Endothelial cell of umbilical vein (primary cell): ENCODE measurements at regions of chr5 and their contacts with region 1.

Region 1: DNA sequence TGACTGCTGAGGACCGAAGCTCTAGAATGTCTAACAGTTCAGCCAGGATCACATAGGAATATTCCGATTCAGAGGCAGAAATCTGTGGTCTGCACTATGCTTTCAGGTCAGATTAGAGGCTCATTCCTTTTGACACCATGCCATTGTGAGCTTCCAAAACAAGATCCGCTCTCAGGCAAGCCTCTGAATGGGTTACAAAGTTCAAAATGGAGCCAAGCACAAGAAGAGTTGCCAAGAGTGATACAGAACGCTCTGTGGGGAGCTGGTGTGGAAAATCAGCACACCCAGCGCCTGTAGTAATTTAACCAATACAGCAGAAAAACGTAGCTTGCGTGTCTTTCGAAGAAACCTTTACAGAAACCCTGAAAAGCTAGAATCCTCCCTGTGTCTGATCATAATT is 33.3 kb upstream of the FAT2 start:
- DNase-seq: no peak
- H3K4me3 ChIP-seq: no peak overlapping the region
- H3K27ac ChIP-seq: no peak overlapping the region
- H3K4me1 ChIP-seq: no peaks in the 10 kb centered on the region
- H3K27me3 ChIP-seq: peaks cover 2 to 3% of the 10 kb centered on the region in 2 experiments
- CTCF ChIP-seq: no peak
- POLR2A ChIP-seq: no peak

Region 2: GRCh38 chr5:151591144-151591819 is 33.2 kb before region 1 on chr5 and contains the start of gene FAT2:
- CTCF ChIA-PET with region 1: no interaction called
- POLR2A ChIA-PET with region 1: no interaction called
- dilution Hi-C with region 1: no loop called
- intact Hi-C with region 1: loop called (anchors 1 kb)
- DNase-seq: no peak
- H3K4me3 ChIP-seq: no peak within 1 kb of the TSS
- H3K27ac ChIP-seq: no peak within 1 kb of the TSS
- H3K4me1 ChIP-seq: no peaks in the 10 kb centered on the region
- H3K27me3 ChIP-seq: no peaks in the 10 kb centered on the region
- CTCF ChIP-seq: no peak
- POLR2A ChIP-seq: no peak
- total RNA-seq, gene FAT2: not detected in 2 replicates

Region 3: GRCh38 chr5:151733358-151734063 is 109.0 kb after region 1 on chr5:
- CTCF ChIA-PET with region 1: no interaction called
- POLR2A ChIA-PET with region 1: no interaction called
- dilution Hi-C with region 1: no loop called
- intact Hi-C with region 1: no loop called
- DNase-seq: no peak
- H3K4me3 ChIP-seq: no peak overlapping the region
- H3K27ac ChIP-seq: no peak overlapping the region
- H3K4me1 ChIP-seq: no peaks in the 10 kb centered on the region
- H3K27me3 ChIP-seq: no peaks in the 10 kb centered on the region
- CTCF ChIP-seq: no peak
- POLR2A ChIP-seq: no peak

Region 4: DNA sequence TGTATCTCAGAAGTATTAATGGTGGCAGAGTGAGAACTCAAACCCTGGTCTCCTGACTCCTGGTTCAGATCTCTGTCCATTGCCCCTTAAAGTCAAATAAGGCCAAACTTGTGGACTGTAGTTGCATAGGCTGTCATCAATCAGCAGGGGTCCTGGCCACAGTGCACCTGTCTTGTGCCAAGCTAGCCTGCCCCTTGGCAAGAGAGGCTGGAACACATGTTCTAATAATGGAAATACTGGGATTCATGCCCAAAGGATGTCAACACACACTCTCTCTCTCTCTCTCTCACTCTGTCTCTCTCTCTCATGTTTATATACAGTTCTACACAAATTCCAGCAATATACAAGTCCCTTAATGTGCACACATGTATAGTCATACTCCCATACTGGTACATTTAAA is 255.8 kb after region 1 on chr5:
- CTCF ChIA-PET with region 1: no interaction called
- POLR2A ChIA-PET with region 1: no interaction called
- dilution Hi-C with region 1: no loop called
- intact Hi-C with region 1: no loop called
- DNase-seq: no peak
- H3K4me3 ChIP-seq: no peak overlapping the region
- H3K27ac ChIP-seq: no peak overlapping the region
- H3K4me1 ChIP-seq: no peaks in the 10 kb centered on the region
- H3K27me3 ChIP-seq: no peaks in the 10 kb centered on the region
- CTCF ChIP-seq: no peak
- POLR2A ChIP-seq: no peak

Region 5: GRCh38 chr5:152142840-152143469 is 518.5 kb after region 1 on chr5:
- CTCF ChIA-PET with region 1: no interaction called
- POLR2A ChIA-PET with region 1: no interaction called
- dilution Hi-C with region 1: no loop called
- intact Hi-C with region 1: no loop called
- DNase-seq: peak; percentile 47
- H3K4me3 ChIP-seq: no peak overlapping the region
- H3K27ac ChIP-seq: no peak overlapping the region
- H3K4me1 ChIP-seq: no peaks in the 10 kb centered on the region
- H3K27me3 ChIP-seq: no peaks in the 10 kb centered on the region
- CTCF ChIP-seq: peak; percentile 76 to 94
- POLR2A ChIP-seq: no peak